ENCODE measurements at regions of chr1 and their contacts with region 1.

Region 1: DNA sequence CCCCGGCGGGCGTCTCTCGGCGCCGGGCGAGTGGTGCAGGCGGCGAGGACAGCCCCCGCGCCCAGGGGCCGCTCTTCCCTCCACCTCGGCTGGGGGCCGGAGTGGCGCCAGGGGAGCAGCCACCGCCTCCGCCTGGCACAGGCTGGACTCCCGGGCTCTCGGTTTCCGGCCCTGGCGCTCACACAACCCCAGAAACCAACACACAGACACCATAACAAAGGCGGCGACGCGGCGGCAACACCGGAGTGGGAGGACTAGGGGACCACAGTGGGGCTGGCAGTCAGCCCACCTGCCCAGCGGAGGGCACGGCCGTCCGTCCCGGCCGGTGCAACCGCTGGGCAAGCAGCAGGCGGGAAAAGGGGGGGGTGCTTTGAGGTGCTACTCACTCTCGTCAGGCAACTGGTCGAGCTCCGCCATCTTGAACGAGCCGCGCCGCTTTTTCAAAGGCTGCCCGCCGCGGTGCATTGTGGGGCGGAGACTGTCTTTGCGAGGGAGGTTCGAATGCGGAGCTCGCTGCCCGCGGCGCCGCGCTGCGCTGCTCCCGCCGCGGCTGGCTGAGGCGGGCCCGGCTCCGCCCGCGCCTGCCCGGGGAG is at the start of gene LIN9:
- DNase-seq: peak; percentile 94 to 95
- H3K4me3 ChIP-seq: peak within 1 kb of the TSS; percentile 100
- H3K4me3 Mint-ChIP-seq: peak within 1 kb of the TSS; percentile 78
- H3K27ac Mint-ChIP-seq: peak within 1 kb of the TSS; percentile 88
- H3K4me1 ChIP-seq: peaks cover 19% of the 10 kb centered on the region
- H3K4me1 Mint-ChIP-seq: peaks cover 23% of the 10 kb centered on the region
- H3K27me3 ChIP-seq: no peaks in the 10 kb centered on the region
- H3K27me3 Mint-ChIP-seq: no peaks in the 10 kb centered on the region
- CTCF ChIP-seq: peak in 1 of 2 experiments; percentile 0
- total RNA-seq, gene LIN9: 11.0 and 12.2 TPM in 2 replicates

Region 2: DNA sequence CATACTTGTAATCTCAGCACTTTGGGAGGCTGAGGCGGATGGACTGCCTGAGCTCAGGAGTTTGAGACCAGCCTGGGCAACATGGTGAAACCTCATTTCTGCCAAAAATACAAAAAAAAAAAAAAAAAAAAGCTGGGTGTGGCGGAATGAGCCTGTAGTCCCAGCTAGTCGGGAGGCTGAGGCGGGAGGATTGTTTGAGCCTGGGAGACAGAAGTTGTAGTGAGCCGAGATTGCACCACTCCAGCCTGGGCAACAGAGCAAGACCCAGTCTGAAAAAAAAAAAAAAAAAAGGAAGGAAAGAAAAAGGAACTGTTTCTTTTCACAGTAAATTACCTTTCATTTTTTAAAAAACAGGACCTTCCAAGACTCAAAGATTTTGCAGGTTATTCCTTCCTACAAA is 29.3 kb before region 1 on chr1:
- CTCF ChIA-PET with region 1: no interaction called
- POLR2A ChIA-PET with region 1: interaction called, 13 read pairs
- intact Hi-C with region 1: no loop called
- DNase-seq: no peak
- H3K4me3 ChIP-seq: no peak overlapping the region
- H3K4me3 Mint-ChIP-seq: no peak overlapping the region
- H3K27ac Mint-ChIP-seq: no peak overlapping the region
- H3K4me1 ChIP-seq: no peaks in the 10 kb centered on the region
- H3K4me1 Mint-ChIP-seq: no peaks in the 10 kb centered on the region
- H3K27me3 ChIP-seq: no peaks in the 10 kb centered on the region
- H3K27me3 Mint-ChIP-seq: no peaks in the 10 kb centered on the region
- CTCF ChIP-seq: no peak

Region 3: DNA sequence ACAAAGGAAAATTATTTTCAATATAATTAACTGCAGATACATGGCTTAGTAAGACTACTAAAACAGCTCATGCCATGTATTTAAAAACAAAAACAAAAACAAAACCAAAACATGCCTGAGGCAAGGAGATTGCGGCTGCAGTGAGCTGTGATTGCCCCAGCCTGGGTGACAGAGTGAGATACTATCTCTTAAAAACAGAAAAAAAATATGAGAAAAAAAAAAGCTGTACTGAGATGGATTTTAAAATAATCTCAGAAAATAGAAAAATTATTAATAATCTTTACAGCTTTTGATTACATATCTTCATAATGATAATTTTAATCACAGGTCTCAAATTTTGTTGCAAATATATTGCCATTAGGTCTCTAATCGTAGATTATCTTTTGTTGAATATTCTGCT is 24.1 kb after region 1 on chr1:
- CTCF ChIA-PET with region 1: interaction called, 8 read pairs
- POLR2A ChIA-PET with region 1: interaction called, 6 read pairs
- intact Hi-C with region 1: loop called (anchors 1 kb)
- DNase-seq: no peak
- H3K4me3 ChIP-seq: no peak overlapping the region
- H3K4me3 Mint-ChIP-seq: peak overlapping the region; percentile 70
- H3K27ac Mint-ChIP-seq: no peak overlapping the region
- H3K4me1 ChIP-seq: no peaks in the 10 kb centered on the region
- H3K4me1 Mint-ChIP-seq: no peaks in the 10 kb centered on the region
- H3K27me3 ChIP-seq: no peaks in the 10 kb centered on the region
- H3K27me3 Mint-ChIP-seq: no peaks in the 10 kb centered on the region
- CTCF ChIP-seq: no peak

Region 4: GRCh38 chr1:226407497-226408284 is 98.9 kb after region 1 on chr1 and contains the start of gene PARP1:
- CTCF ChIA-PET with region 1: interaction called, 5 read pairs
- POLR2A ChIA-PET with region 1: no interaction called
- intact Hi-C with region 1: loop called (anchors 5 kb)
- DNase-seq: peak; percentile 89 to 92
- H3K4me3 ChIP-seq: peak within 1 kb of the TSS; percentile 86
- H3K4me3 Mint-ChIP-seq: peak within 1 kb of the TSS; percentile 86
- H3K27ac Mint-ChIP-seq: peak within 1 kb of the TSS; percentile 74
- H3K4me1 ChIP-seq: peaks cover 21% of the 10 kb centered on the region
- H3K4me1 Mint-ChIP-seq: peaks cover 21% of the 10 kb centered on the region
- H3K27me3 ChIP-seq: no peaks in the 10 kb centered on the region
- H3K27me3 Mint-ChIP-seq: no peaks in the 10 kb centered on the region
- CTCF ChIP-seq: peak; percentile 33 to 84
- total RNA-seq, gene PARP1: 127 and 136 TPM in 2 replicates